ENCODE measurements at regions of chr2 and their contacts with region 1.

Region 1: GRCh38 chr2:132853128-132853527 is 183.1 kb upstream of the LYPD1 start:
- DNase-seq: no peak
- ATAC-seq: no peak
- H3K4me3 ChIP-seq: no peak overlapping the region
- H3K27ac ChIP-seq: no peak overlapping the region
- H3K4me1 ChIP-seq: no peaks in the 10 kb centered on the region
- H3K27me3 ChIP-seq: no peaks in the 10 kb centered on the region

Region 2: GRCh38 chr2:132477962-132478361 is 375.2 kb before region 1 on chr2:
- intact Hi-C with region 1: no loop called
- DNase-seq: no peak
- ATAC-seq: no peak
- H3K4me3 ChIP-seq: no peak overlapping the region
- H3K27ac ChIP-seq: no peak overlapping the region
- H3K4me1 ChIP-seq: no peaks in the 10 kb centered on the region
- H3K27me3 ChIP-seq: peaks cover 0 to 2% of the 10 kb centered on the region in 2 donors

Region 3: DNA sequence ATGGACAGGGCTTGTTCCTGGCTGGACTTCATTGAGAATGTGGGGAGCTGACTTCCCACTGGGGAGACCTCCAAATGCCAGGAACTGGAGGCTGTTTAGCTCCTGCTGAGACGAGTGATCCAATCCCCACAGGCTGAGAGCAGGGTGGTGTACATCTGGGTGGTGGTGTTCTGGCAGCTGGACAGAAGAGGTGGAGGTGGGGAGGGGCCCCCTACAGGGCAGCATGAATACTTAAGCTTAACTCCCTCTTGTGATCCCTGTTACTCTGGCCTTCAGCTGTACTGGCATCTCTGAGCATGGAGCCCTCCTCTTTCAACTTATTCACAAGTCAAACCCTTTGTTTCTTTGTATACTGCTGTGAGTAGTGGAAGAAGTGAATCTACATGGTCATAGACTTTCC is 15.4 kb before region 1 on chr2:
- intact Hi-C with region 1: loop called in 1 of 2 experiments (anchors 1 kb)
- DNase-seq: no peak
- ATAC-seq: no peak
- H3K4me3 ChIP-seq: no peak overlapping the region
- H3K27ac ChIP-seq: no peak overlapping the region
- H3K4me1 ChIP-seq: no peaks in the 10 kb centered on the region
- H3K27me3 ChIP-seq: no peaks in the 10 kb centered on the region

Region 4: GRCh38 chr2:132876744-132877391 is 23.7 kb after region 1 on chr2:
- intact Hi-C with region 1: no loop called
- DNase-seq: no peak
- ATAC-seq: no peak
- H3K4me3 ChIP-seq: no peak overlapping the region
- H3K27ac ChIP-seq: no peak overlapping the region
- H3K4me1 ChIP-seq: no peaks in the 10 kb centered on the region
- H3K27me3 ChIP-seq: peaks cover 0 to 2% of the 10 kb centered on the region in 2 donors